ENCODE measurements at regions of chr7 and their contacts with region 1.

Region 1: DNA sequence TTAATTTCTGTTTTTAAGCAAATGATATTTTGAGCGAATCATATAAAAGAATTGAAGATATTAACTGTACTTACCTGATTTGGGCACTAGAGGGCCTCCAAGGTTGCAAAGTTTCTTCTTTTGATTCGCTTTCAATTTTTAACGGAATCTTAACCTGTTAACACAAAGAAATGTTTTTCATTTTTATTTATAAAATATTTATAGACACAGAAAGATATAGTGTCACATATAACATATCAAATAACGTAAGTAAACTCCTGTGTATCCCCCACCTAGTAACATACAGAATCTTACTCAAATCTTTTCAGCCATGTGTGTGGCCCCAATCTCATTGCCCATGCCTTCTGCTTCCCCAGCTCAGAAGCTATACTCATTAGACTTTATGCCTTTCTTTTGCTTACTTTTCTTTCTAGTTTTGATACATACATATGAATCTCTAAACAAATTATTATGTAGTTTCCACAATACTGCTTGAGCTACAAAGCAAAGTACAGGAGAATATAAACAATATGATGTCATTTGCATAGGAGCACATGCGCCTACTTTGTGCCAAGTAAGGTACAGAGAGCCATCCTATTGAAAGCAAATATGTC is 49.5 kb upstream of the ZPBP start:
- DNase-seq: no peak
- H3K4me3 Mint-ChIP-seq: peak overlapping the region; percentile 14
- H3K27ac Mint-ChIP-seq: peak overlapping the region; percentile 59
- H3K4me1 Mint-ChIP-seq: peaks cover 28% of the 10 kb centered on the region
- H3K27me3 Mint-ChIP-seq: peaks cover 2% of the 10 kb centered on the region

Region 2: GRCh38 chr7:50156706-50157105 is 14.2 kb after region 1 on chr7:
- CTCF ChIA-PET with region 1: interaction called, 14 read pairs
- POLR2A ChIA-PET with region 1: interaction called, 3 read pairs
- intact Hi-C with region 1: no loop called
- DNase-seq: no peak
- H3K4me3 Mint-ChIP-seq: peak overlapping the region; percentile 49
- H3K27ac Mint-ChIP-seq: peak overlapping the region; percentile 70
- H3K4me1 Mint-ChIP-seq: peaks cover 34% of the 10 kb centered on the region
- H3K27me3 Mint-ChIP-seq: no peaks in the 10 kb centered on the region

Region 3: DNA sequence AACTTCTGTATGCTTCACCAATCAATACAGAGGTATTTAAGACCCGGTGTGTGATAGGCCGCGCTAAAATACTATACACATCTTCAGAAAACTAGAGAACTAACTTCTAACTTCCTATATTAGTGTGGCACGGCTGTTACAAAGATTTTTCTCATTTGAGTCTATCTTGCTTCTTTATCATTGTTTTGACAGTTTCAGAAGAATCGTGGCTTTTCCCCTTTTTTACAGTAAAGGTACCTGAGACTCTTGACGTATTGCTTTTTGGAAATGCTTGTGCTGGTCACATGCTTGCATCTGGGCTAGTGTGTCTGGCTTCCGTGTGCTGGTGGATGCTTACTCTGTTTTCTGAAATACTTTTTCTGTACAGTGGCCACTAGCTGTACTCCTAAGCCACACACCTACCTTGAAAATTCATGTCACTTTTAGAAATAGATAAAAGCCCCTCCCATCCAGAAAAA is 174.7 kb after region 1 on chr7:
- CTCF ChIA-PET with region 1: interaction called, 5 read pairs
- POLR2A ChIA-PET with region 1: no interaction called
- intact Hi-C with region 1: loop called (anchors 2 kb)
- DNase-seq: peak; percentile 75
- H3K4me3 Mint-ChIP-seq: peak overlapping the region; percentile 86
- H3K27ac Mint-ChIP-seq: peak overlapping the region; percentile 94
- H3K4me1 Mint-ChIP-seq: peaks cover 92% of the 10 kb centered on the region
- H3K27me3 Mint-ChIP-seq: no peaks in the 10 kb centered on the region

Region 4: GRCh38 chr7:50467817-50468610 is 325.5 kb after region 1 on chr7:
- CTCF ChIA-PET with region 1: interaction called, 17 read pairs
- POLR2A ChIA-PET with region 1: no interaction called
- intact Hi-C with region 1: loop called (anchors 5 kb)
- DNase-seq: peak; percentile 89
- H3K4me3 Mint-ChIP-seq: no peak overlapping the region
- H3K27ac Mint-ChIP-seq: no peak overlapping the region
- H3K4me1 Mint-ChIP-seq: peaks cover 12% of the 10 kb centered on the region
- H3K27me3 Mint-ChIP-seq: peaks cover 2% of the 10 kb centered on the region

Region 5: DNA sequence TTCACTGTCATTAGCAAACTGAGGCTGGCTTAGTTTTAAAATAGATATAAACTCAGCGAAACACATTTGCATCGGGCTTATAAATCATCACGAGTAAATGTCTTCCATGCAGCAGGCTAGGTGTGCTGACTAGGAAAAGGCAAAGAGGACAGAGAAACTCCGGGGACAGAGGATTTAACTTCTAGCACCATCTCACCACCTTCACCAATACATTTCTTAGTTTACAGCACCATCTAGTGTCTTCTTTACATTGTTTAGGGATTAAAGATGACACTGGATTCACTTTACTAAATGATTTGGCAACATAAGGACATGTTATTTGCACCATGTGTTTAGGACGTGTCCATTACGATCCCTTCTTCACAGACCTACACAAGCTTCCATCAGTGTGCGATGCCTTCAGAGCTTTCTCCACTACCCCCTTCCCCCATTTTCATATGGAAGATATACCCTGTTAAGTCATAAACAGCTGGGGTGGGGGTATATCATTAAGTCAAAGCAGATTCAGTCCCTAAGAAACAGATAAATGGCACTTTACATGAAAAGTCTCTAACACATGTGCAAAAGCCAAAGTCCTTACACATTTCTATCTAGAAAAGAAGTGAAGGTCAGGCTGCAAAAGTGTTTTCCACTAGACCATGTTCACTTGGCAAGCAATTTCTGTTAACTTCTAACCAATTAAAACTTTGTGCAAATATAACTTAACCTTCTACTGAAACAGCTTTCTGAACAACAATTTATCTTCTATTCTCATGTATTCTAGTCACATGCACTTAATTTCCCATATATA is 536.9 kb after region 1 on chr7:
- CTCF ChIA-PET with region 1: interaction called, 9 read pairs
- POLR2A ChIA-PET with region 1: no interaction called
- intact Hi-C with region 1: loop called (anchors 2 kb)
- DNase-seq: no peak
- H3K4me3 Mint-ChIP-seq: no peak overlapping the region
- H3K27ac Mint-ChIP-seq: no peak overlapping the region
- H3K4me1 Mint-ChIP-seq: no peaks in the 10 kb centered on the region
- H3K27me3 Mint-ChIP-seq: no peaks in the 10 kb centered on the region